B cell (primary cell): ENCODE measurements at regions of chr12 and their contacts with region 1.

Region 1: GRCh38 chr12:66087365-66087943 is 43.1 kb downstream of the LLPH start:
- DNase-seq: peak; percentile 60
- ATAC-seq: no peak
- H3K4me3 ChIP-seq: no peak overlapping the region
- H3K4me3 Mint-ChIP-seq: no peak overlapping the region
- H3K27ac ChIP-seq: no peak overlapping the region
- H3K27ac Mint-ChIP-seq: no peak overlapping the region
- H3K4me1 ChIP-seq: no peaks in the 10 kb centered on the region
- H3K4me1 Mint-ChIP-seq: no peaks in the 10 kb centered on the region
- H3K27me3 ChIP-seq: peaks cover 0 to 2% (median 0%) of the 10 kb centered on the region in 4 experiments
- H3K27me3 Mint-ChIP-seq: peaks cover 16% of the 10 kb centered on the region
- CTCF ChIP-seq: peak; percentile 74

Region 2: DNA sequence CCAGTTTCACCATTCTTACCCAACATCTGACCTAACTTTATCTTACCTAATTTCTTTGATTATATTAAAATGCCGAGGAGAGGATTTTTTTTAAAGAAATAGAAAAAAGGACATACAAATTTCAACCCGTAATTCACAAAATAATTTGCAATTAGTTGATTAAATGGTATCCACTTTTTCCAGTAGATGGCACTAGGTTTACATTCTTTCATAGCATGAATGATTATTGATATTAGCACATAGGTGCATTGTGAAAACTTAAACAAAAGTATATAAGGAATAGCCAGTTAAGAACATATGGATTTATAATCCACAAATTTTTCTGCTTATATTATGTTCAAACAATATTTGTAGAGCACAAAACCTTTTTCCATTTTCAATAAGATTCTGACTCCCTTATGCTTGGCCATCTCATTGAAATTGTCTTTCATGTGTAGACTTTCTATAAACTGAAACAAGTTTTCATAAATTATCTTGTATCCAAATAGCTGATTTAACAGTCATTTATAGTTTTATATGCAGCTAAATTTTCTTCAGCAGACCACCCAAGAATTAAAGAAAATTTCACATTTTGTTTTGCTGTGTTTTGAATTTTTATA is 773.6 kb before region 1 on chr12:
- CTCF ChIA-PET with region 1: no interaction called
- POLR2A ChIA-PET with region 1: no interaction called
- intact Hi-C with region 1: loop called (anchors 10 kb)
- DNase-seq: no peak
- ATAC-seq: no peak
- H3K4me3 ChIP-seq: no peak overlapping the region
- H3K4me3 Mint-ChIP-seq: no peak overlapping the region
- H3K27ac ChIP-seq: no peak overlapping the region
- H3K27ac Mint-ChIP-seq: no peak overlapping the region
- H3K4me1 ChIP-seq: peaks cover under 1 to 9% of the 10 kb centered on the region in 2 donors
- H3K4me1 Mint-ChIP-seq: peaks cover 8% of the 10 kb centered on the region
- H3K27me3 ChIP-seq: no peaks in the 10 kb centered on the region
- H3K27me3 Mint-ChIP-seq: peaks cover 4% of the 10 kb centered on the region
- CTCF ChIP-seq: no peak

Region 3: DNA sequence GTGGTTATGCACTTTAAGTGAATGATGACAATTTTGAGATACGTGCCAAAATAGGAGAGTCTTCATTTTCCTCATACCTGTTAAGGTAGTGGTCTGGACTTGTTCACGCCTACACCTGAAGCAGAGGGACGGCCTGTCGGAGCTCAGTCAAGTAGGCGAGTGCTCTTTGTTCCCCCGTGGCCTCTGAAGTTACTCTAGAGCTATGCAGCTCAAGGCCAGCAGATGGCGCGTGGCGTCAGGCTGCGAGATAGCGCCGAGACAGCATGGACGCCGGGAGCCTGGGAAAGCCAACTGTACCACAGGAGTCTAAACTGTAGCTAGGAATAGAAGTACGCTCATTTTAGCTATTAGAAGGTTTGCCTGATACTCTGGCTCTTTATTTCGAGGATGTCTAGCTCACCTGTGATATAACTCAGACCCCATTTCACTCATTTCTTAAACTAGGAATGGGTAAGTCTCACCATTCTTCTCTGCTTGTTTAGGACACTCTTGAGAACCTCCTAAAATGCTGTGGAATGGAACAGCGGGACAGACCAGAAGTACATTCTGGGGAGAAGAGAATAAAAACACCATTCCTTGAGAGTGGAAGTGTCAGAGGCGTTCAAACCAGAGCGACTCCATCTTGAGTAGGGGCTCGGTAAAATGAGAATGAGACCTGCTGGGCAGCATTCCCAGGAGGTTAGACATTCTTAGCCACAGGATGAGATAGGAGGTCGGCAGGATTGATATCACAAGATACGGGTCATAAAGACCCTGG is 530.6 kb before region 1 on chr12:
- CTCF ChIA-PET with region 1: interaction called, 14 read pairs
- POLR2A ChIA-PET with region 1: no interaction called
- intact Hi-C with region 1: no loop called
- DNase-seq: peak; percentile 66
- ATAC-seq: peak; percentile 60
- H3K4me3 ChIP-seq: no peak overlapping the region
- H3K4me3 Mint-ChIP-seq: no peak overlapping the region
- H3K27ac ChIP-seq: no peak overlapping the region
- H3K27ac Mint-ChIP-seq: no peak overlapping the region
- H3K4me1 ChIP-seq: no peaks in the 10 kb centered on the region
- H3K4me1 Mint-ChIP-seq: peaks cover 5% of the 10 kb centered on the region
- H3K27me3 ChIP-seq: peaks cover 0 to 7% (median 0%) of the 10 kb centered on the region in 4 experiments
- H3K27me3 Mint-ChIP-seq: peaks cover 13% of the 10 kb centered on the region
- CTCF ChIP-seq: peak; percentile 83